BJ (cell line): ENCODE measurements at regions of chr2 and their contacts with region 1.

Region 1: GRCh38 chr2:237512774-237513466 is 25.9 kb downstream of the MLPH start:
- DNase-seq: peak; percentile 32
- H3K4me3 ChIP-seq: no peak overlapping the region
- H3K27me3 ChIP-seq: no peaks in the 10 kb centered on the region
- CTCF ChIP-seq: peak; percentile 87

Region 2: GRCh38 chr2:237092920-237093781 is 419.8 kb before region 1 on chr2:
- CTCF ChIA-PET with region 1: interaction called, 15 read pairs
- POLR2A ChIA-PET with region 1: no interaction called
- DNase-seq: no peak
- H3K4me3 ChIP-seq: no peak overlapping the region
- H3K27me3 ChIP-seq: no peaks in the 10 kb centered on the region
- CTCF ChIP-seq: peak; percentile 69

Region 3: DNA sequence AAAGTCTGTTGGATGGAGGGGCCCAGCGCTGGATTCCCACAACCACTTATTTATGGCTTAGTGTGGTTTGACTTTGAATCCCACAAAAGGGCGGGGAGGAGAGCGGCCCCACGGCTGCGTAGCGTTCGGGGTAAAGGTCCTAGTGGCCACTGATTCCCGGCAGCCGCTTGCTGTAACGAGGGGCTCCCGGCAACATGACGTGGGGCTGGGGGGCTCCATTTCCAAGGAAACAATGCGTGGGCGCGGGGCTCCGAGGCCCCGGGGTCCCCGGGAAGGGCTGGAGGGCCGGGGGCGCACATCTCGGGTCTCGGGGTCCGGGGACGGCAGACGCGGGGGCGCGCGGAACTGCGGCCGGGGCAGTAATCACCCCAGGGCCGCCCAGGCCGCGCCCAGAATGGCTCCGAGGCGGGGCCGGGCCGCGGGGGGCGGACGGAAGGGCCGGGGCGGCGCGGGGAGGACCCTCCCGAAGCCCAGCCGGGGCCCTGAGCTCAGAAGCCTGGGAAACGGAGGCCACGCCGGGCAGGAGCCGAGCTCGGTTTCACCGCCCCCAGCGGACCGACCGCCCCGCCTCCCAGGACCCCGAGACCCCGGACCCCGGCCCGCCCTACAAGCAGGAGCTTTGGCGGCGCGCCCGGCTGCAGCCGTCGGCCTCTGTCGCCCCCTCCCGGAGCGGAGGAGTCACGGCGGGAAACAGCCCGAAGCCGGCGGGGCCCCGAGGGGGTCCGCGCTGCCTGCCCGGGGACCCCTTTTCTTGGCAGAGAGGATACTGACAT is 37.8 kb before region 1 on chr2:
- CTCF ChIA-PET with region 1: interaction called, 30 read pairs
- POLR2A ChIA-PET with region 1: no interaction called
- DNase-seq: no peak
- H3K4me3 ChIP-seq: peak overlapping the region; percentile 50
- H3K27me3 ChIP-seq: no peaks in the 10 kb centered on the region
- CTCF ChIP-seq: peak; percentile 78

Region 4: GRCh38 chr2:237500681-237501424 is 12.1 kb before region 1 on chr2:
- CTCF ChIA-PET with region 1: interaction called, 60 read pairs
- POLR2A ChIA-PET with region 1: no interaction called
- DNase-seq: peak; percentile 100
- H3K4me3 ChIP-seq: no peak overlapping the region
- H3K27me3 ChIP-seq: no peaks in the 10 kb centered on the region
- CTCF ChIP-seq: no peak

Region 5: DNA sequence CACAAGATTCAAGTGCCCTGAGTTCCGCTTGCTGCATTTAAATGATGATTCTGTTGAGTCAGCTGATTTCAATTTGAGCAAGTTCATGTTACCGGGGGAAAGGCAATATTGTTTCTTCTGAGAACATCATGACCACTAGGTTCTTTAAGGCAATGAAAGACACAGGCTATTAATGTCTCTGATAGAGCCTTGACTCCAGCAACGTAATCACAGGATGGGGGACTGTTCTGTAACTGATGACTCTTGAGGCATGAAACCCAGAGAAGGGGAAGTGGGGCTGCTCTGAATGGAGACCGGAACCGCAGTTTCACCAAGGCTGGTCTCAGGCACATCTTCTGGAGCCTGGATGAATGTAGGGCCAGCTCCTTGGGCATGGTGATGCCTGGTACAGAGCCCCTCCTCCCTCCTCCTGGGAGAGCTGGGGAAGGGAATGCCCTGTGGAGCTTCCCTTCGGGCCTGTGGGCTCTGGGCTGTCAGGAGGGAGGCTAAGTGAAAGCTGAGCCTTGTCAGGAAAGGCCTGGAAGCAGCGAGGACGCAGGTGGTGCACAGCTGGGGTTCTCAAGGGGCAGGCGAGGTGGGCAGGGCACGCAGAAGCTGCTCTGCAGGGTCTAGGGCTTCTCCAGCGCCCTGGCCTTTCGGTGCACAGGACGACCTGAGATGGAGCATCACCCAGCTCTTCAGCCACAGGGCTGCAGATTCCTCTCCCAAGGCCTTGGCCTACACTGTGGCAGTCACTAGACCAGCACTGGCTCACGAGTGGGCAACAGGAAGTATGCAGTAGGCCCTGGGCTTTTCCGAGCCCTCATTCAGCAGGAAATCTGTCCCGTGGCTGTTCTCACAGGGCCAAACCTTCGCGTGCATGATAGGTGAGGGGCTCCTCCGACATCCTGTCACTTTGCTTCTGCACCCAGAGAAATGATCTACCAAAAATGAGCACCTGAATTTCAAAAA is 16.8 kb after region 1 on chr2:
- CTCF ChIA-PET with region 1: interaction called, 23 read pairs
- POLR2A ChIA-PET with region 1: no interaction called
- DNase-seq: no peak
- H3K4me3 ChIP-seq: no peak overlapping the region
- H3K27me3 ChIP-seq: no peaks in the 10 kb centered on the region
- CTCF ChIP-seq: no peak

Region 6: GRCh38 chr2:237581751-237582746 is 69.1 kb after region 1 on chr2:
- CTCF ChIA-PET with region 1: interaction called, 16 read pairs
- POLR2A ChIA-PET with region 1: no interaction called
- DNase-seq: no peak
- H3K4me3 ChIP-seq: 0 out of 2 replicates have a peak overlapping the region, but pooled peaks have one; percentile 15
- H3K27me3 ChIP-seq: peaks cover 3% of the 10 kb centered on the region; the same call in 1 of the 2 replicates
- CTCF ChIP-seq: peak; percentile 55

Region 7: GRCh38 chr2:237674731-237675276 is 161.9 kb after region 1 on chr2:
- CTCF ChIA-PET with region 1: no interaction called
- POLR2A ChIA-PET with region 1: no interaction called
- DNase-seq: peak; percentile 47
- H3K4me3 ChIP-seq: no peak overlapping the region
- H3K27me3 ChIP-seq: no peaks in the 10 kb centered on the region
- CTCF ChIP-seq: no peak